Mammary epithelial cell (primary cell): ENCODE measurements at regions of chr3 and their contacts with region 1.

Region 1: GRCh38 chr3:48739955-48740823 is 23.2 kb upstream of the IP6K2 start:
- DNase-seq: peak; percentile 54
- H3K4me3 ChIP-seq: no peak overlapping the region
- H3K27ac ChIP-seq: no peak overlapping the region
- H3K4me1 ChIP-seq: peaks cover 22% of the 10 kb centered on the region
- H3K27me3 ChIP-seq: no peaks in the 10 kb centered on the region
- CTCF ChIP-seq: peak; percentile 77 to 95

Region 2: DNA sequence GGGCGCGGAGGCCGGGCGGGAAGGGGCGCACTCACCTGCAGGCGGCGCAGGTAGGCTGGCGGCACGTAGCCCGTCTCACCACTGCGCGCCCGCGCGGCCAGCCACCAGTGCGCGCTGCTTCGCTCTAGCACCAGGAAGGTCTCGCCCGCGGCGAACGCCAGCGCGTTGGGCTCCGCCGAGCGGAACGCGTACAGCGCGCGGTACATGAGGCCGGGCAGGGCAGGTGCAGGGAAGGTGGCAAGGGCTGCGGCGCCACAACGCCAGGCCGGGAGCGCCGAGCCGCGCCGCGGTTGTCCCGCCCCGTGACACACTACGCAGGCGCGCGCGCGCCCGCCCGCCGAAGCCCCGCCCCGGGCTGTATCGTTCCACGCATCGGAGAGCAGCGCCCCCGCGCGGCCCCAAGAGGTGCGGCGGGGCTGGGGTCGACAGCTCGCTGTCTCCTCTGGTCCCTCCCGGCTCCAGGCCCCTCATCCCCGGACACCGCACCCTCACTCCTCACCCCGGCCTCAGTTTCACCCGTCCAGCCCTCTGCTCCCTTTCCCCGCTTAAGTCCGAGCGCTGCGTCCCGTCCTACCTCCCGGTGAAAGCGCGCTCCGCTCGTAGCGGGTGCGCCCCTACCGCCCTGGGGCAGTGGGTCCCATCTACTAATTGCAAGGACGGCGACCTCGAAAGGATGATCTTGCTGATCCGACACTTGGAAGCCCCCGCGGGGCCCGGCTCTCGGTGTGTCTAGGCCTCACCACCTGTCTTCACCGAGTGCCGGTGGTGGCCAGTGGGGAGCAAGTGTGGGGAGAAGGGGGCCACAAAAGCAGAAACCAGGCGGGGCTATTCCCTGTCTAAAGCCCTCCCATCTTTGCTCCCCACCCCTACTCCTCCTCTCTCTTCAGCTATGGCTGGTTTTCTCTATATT is 54.3 kb before region 1 on chr3 and contains the start of gene NCKIPSD:
- CTCF ChIA-PET with region 1: interaction called, 3 read pairs
- dilution Hi-C with region 1: no loop called
- in situ Hi-C with region 1: no loop called
- intact Hi-C with region 1: loop called (anchors 1 kb)
- DNase-seq: peak; percentile 79
- H3K4me3 ChIP-seq: peak within 1 kb of the TSS; percentile 51 to 91 (median 79)
- H3K27ac ChIP-seq: peak within 1 kb of the TSS; percentile 69
- H3K4me1 ChIP-seq: peaks cover 32% of the 10 kb centered on the region
- H3K27me3 ChIP-seq: no peaks in the 10 kb centered on the region
- CTCF ChIP-seq: peak; percentile 45 to 87
- total RNA-seq, gene NCKIPSD: 14.8 to 21.1 TPM

Region 3: GRCh38 chr3:48694610-48695392 is 45.4 kb before region 1 on chr3:
- CTCF ChIA-PET with region 1: interaction called, 4 read pairs
- dilution Hi-C with region 1: no loop called
- in situ Hi-C with region 1: no loop called
- intact Hi-C with region 1: loop called (anchors 2 kb)
- DNase-seq: peak; percentile 85
- H3K4me3 ChIP-seq: peak overlapping the region in 2 of 3 experiments; percentile 30 to 37
- H3K27ac ChIP-seq: peak overlapping the region; percentile 81
- H3K4me1 ChIP-seq: peaks cover 43% of the 10 kb centered on the region
- H3K27me3 ChIP-seq: no peaks in the 10 kb centered on the region
- CTCF ChIP-seq: no peak